ENCODE measurements at regions of chr16 and their contacts with region 1.

Region 1: DNA sequence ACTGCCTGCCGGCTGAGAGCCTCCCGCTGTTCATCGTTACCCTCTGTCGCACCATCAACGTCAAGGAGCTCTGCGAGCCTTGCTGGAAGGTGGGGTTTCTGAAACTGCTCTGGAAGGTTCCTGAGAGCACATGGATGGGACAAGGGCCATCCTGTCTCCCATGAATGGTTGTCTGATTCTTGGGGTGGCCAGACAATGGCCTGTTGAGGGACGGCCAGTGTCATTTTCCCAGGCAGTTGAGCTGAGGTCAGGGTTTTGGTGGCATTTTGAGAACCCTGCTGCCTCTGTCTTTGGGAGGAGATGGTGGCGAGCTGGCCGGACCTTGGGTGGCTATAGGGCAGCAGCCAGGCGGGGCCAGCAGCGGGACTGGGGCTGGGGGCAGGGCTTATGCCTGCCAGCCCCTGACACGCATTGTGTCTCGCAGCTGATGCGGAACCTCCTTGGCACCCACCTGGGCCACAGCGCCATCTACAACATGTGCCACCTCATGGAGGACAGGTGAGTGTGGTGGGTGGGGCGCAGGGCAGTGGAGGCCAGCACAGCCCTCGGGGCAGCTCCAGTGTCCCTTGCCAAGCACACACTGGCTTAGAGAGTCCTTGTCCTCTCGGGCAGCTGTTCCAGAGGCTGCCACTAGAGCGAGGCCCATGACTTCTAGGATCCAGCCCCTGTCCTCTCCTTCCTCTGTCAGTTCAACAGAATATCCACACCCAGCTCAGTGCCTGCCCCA is 9.1 kb downstream of the TSC2 start:
- DNase-seq: no peak
- H3K4me3 ChIP-seq: no peak overlapping the region
- H3K27ac ChIP-seq: no peak overlapping the region; the same call in 1 of the 2 replicates
- H3K4me1 ChIP-seq: no peaks in the 10 kb centered on the region
- H3K27me3 ChIP-seq: no peaks in the 10 kb centered on the region
- CTCF ChIP-seq: peak in 2 of 3 experiments; percentile 43 to 53; a peak in 3 of 4 replicates
- EP300 ChIP-seq: no peak
- POLR2A ChIP-seq: no peak
- RAD21 ChIP-seq: peak; percentile 15 to 17; a peak in 2 of 4 replicates

Region 2: GRCh38 chr16:1763521-1764511 is 293.0 kb before region 1 on chr16:
- CTCF ChIA-PET with region 1: no interaction called
- POLR2A ChIA-PET with region 1: no interaction called
- DNase-seq: peak; percentile 59 to 92
- H3K4me3 ChIP-seq: peak overlapping the region; percentile 8 to 57 (median 36); a peak in 7 of 8 replicates
- H3K27ac ChIP-seq: no peak overlapping the region
- H3K4me1 ChIP-seq: peaks cover 0 to 13% (median 7%) of the 10 kb centered on the region in 4 experiments; a peak in 5 of 7 replicates
- H3K27me3 ChIP-seq: no peaks in the 10 kb centered on the region; a peak in 1 of 7 replicates
- CTCF ChIP-seq: peak in 2 of 3 experiments; percentile 66 to 82; a peak in 3 of 4 replicates
- EP300 ChIP-seq: no peak
- POLR2A ChIP-seq: no peak
- RAD21 ChIP-seq: peak; percentile 71 to 75

Region 3: GRCh38 chr16:2082160-2082982 is 25.5 kb after region 1 on chr16:
- CTCF ChIA-PET with region 1: interaction called, 13 read pairs
- POLR2A ChIA-PET with region 1: interaction called, 5 read pairs
- DNase-seq: no peak
- H3K4me3 ChIP-seq: no peak overlapping the region
- H3K27ac ChIP-seq: no peak overlapping the region
- H3K4me1 ChIP-seq: no peaks in the 10 kb centered on the region
- H3K27me3 ChIP-seq: no peaks in the 10 kb centered on the region
- CTCF ChIP-seq: no peak
- EP300 ChIP-seq: no peak
- POLR2A ChIP-seq: no peak
- RAD21 ChIP-seq: no peak

Region 4: DNA sequence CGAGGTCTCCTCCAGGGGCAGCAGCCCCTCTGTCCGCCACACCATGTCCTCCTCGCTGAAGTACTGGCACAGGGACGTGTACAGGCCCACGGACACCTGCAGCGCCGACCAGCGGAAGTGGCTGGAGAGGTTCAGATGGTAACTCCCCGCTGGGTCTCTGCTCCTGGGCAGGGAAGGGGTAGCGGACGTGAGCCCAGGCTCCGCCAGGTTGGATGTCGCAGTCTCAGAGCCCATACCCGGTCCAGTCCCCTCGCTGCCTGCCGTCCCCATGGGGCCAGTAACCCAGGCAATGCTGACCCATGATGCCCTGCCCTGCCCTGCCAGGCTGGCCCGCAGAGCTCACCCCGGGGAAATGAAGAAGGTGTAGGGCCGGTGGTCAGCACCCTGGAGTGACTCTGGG is 45.6 kb after region 1 on chr16:
- CTCF ChIA-PET with region 1: no interaction called
- POLR2A ChIA-PET with region 1: no interaction called
- DNase-seq: no peak
- H3K4me3 ChIP-seq: no peak overlapping the region
- H3K27ac ChIP-seq: no peak overlapping the region
- H3K4me1 ChIP-seq: no peaks in the 10 kb centered on the region
- H3K27me3 ChIP-seq: no peaks in the 10 kb centered on the region
- CTCF ChIP-seq: no peak
- EP300 ChIP-seq: no peak
- POLR2A ChIP-seq: no peak
- RAD21 ChIP-seq: no peak

Region 5: DNA sequence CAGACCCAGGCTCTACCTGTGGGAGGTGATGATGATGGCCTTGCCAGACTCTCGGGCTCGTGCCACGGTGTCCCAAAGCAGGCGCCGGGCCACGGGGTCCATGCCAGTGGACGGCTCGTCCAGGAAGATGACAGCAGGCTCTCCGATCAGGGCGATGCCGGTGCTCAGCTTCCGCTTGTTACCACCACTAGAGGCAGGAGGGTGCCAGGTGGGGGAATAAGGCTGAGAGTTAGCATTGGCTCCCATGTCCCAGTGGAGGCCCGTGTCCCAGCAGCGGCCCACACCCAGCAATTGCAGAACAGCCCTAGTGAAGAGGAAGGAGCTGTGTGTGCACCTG is 221.4 kb after region 1 on chr16:
- CTCF ChIA-PET with region 1: no interaction called
- POLR2A ChIA-PET with region 1: no interaction called
- DNase-seq: no peak
- H3K4me3 ChIP-seq: no peak overlapping the region
- H3K27ac ChIP-seq: no peak overlapping the region
- H3K4me1 ChIP-seq: no peaks in the 10 kb centered on the region; a peak in 1 of 7 replicates
- H3K27me3 ChIP-seq: no peaks in the 10 kb centered on the region
- CTCF ChIP-seq: peak; percentile 53 to 66 (median 54)
- EP300 ChIP-seq: no peak
- POLR2A ChIP-seq: no peak
- RAD21 ChIP-seq: peak; percentile 38 to 48